ENCODE measurements at regions of chr7 and their contacts with region 1.

Region 1: DNA sequence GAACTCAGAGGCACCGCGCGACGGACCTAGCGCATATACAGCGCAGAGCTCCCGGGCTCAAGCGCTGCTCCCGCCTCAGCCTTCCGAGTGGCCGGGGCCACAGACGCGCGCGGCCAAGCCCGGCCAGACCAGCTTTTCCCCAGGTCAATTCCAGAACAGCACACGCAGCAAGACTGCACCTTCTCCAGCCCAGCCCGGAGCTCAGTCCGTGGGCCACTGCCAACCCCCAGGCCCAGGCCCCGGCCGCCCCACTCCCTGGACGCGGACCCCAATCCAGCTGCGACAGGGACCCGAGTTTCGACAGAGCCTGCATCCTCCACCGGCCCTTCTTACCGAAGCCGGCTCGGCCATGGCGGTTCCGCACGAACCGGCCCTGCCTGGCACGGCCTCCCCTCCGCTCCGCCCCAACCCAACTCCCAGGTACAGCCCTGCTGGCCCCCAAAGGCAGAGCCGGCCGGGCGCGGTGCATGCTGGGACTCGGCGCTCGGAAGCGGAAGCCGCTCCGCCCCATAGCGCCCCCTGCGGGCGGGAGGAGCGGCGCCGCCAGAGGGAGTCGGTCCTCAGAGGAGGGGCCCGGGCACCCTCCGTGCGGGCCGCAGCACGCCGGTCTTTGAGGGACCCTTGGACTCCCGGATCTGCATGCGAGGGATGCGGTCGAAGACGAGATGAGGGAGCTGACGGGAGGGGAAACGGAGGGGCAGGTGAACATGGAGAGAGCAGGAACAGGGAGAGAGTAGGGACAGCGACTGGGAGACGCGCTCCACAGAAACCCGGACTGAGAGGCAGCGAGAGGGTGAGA is at the start of gene ZNF425:
- DNase-seq: peak; percentile 98
- ATAC-seq: peak; percentile 82
- H3K4me3 Mint-ChIP-seq: peak within 1 kb of the TSS; percentile 98
- H3K27ac Mint-ChIP-seq: peak within 1 kb of the TSS; percentile 98
- H3K4me1 Mint-ChIP-seq: peaks cover 21% of the 10 kb centered on the region
- H3K27me3 Mint-ChIP-seq: no peaks in the 10 kb centered on the region
- CTCF ChIP-seq: peak; percentile 31
- total RNA-seq, gene ZNF425: 1.4 and 1.9 TPM in 2 replicates

Region 2: GRCh38 chr7:148940702-148941597 is 185.1 kb before region 1 on chr7:
- CTCF ChIA-PET with region 1: no interaction called
- POLR2A ChIA-PET with region 1: no interaction called
- intact Hi-C with region 1: loop called (anchors 1 kb)
- DNase-seq: peak; percentile 68
- ATAC-seq: peak; percentile 77
- H3K4me3 Mint-ChIP-seq: peak overlapping the region; percentile 97
- H3K27ac Mint-ChIP-seq: peak overlapping the region; percentile 99
- H3K4me1 Mint-ChIP-seq: peaks cover 17% of the 10 kb centered on the region
- H3K27me3 Mint-ChIP-seq: no peaks in the 10 kb centered on the region
- CTCF ChIP-seq: no peak

Region 3: GRCh38 chr7:149005241-149006050 is 120.6 kb before region 1 on chr7:
- CTCF ChIA-PET with region 1: interaction called, 3 read pairs
- POLR2A ChIA-PET with region 1: interaction called, 4 read pairs
- intact Hi-C with region 1: loop called (anchors 1 kb)
- DNase-seq: peak; percentile 74
- ATAC-seq: peak; percentile 91
- H3K4me3 Mint-ChIP-seq: no peak overlapping the region
- H3K27ac Mint-ChIP-seq: no peak overlapping the region
- H3K4me1 Mint-ChIP-seq: peaks cover 3% of the 10 kb centered on the region
- H3K27me3 Mint-ChIP-seq: no peaks in the 10 kb centered on the region
- CTCF ChIP-seq: peak; percentile 56

Region 4: DNA sequence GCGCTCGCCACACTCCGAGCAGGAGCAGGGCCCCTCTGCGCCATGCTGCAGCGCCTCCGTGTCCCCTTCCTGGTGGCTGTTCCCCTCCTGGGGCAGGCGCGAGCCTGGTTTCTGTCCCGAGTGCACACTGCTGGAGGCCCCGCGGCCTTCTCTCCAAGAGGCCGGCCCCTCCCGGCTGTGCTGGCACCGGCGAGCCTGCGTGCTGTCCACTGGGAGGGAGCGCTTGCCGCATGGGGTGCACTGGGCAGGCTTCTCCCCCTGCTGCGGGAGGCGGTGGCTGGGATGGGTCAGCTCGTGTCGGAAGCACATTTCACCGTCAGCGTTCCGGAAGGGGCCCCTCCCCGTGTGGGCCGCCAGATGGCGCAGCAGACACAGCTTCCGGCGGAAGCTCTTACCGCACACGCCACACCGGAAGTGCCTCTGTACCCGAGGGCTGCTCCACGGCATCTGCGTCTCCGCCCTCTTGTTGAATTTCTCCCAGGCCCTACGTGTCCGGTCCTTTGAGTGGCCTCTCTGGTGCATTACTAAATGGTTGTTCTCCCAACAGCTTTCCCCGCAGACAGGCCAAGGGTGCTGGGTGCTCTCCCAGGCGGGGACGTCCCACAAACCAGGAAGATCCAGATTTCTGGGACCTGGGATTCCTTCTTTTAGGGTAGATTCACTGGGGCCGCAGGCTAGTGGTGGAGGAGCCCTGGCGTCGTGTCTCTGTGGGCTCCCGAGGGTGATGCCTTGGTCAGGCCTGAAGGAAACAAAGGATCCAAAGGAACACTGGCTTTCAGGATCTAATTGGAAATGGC is 54.2 kb before region 1 on chr7:
- CTCF ChIA-PET with region 1: interaction called, 11 read pairs
- POLR2A ChIA-PET with region 1: no interaction called
- intact Hi-C with region 1: no loop called
- DNase-seq: no peak
- ATAC-seq: peak; percentile 45
- H3K4me3 Mint-ChIP-seq: no peak overlapping the region
- H3K27ac Mint-ChIP-seq: no peak overlapping the region
- H3K4me1 Mint-ChIP-seq: peaks cover 4% of the 10 kb centered on the region
- H3K27me3 Mint-ChIP-seq: no peaks in the 10 kb centered on the region
- CTCF ChIP-seq: no peak

Region 5: GRCh38 chr7:149081914-149082313 is 44.1 kb before region 1 on chr7:
- CTCF ChIA-PET with region 1: no interaction called
- POLR2A ChIA-PET with region 1: no interaction called
- intact Hi-C with region 1: no loop called
- DNase-seq: no peak
- ATAC-seq: no peak
- H3K4me3 Mint-ChIP-seq: no peak overlapping the region
- H3K27ac Mint-ChIP-seq: no peak overlapping the region
- H3K4me1 Mint-ChIP-seq: peaks cover 11% of the 10 kb centered on the region
- H3K27me3 Mint-ChIP-seq: no peaks in the 10 kb centered on the region
- CTCF ChIP-seq: no peak

Region 6: DNA sequence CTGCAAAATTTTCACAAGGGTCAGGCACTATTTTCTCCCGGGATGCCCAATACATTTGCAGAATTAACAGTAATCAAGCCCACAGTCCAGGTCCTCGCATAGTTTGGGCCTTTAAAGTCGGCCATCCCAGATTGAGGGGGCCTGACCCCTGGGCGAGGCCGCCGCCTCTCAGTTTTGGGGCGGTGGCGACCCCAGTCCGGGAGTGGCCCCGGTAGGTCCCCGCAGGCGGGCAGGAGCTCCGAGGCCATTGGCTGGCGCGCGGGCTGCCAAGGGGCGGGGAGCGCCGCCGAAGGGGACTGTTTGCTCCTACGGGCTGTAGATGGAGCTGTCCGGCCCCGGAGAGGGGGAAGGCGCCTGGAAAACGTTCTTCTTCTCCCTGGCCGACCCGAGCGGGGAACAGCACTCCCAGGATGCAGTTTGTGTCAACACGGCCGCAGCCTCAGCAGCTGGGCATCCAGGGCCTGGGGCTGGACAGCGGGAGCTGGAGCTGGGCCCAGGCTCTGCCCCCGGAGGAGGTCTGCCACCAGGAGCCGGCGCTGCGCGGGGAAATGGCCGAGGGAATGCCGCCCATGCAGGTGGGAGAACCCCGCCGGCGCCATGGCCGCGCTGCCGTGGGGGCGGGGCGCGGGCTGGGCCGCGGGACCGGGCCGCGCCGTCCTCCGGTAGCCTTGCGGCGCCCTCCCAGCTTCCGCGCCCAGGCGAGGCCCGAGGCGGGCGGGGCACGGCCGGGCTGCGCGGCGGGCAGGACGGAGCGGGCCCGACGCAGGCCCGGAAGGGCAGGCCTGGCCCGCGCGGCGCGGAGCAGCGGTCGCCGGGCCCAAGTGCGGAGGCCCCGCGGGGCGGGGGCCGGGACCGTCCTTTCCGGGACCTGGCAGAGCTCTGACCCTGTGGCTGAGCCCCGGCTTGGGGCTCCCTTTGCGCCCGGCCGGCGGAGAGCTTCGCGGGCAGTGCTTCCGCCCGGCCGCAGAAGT is 69.4 kb after region 1 on chr7 and contains the start of gene ZNF282:
- CTCF ChIA-PET with region 1: interaction called, 5 read pairs
- POLR2A ChIA-PET with region 1: interaction called, 8 read pairs
- intact Hi-C with region 1: loop called (anchors 1 kb)
- DNase-seq: peak; percentile 68
- ATAC-seq: peak; percentile 88
- H3K4me3 Mint-ChIP-seq: peak within 1 kb of the TSS; percentile 89
- H3K27ac Mint-ChIP-seq: peak within 1 kb of the TSS; percentile 66
- H3K4me1 Mint-ChIP-seq: peaks cover 31% of the 10 kb centered on the region
- H3K27me3 Mint-ChIP-seq: no peaks in the 10 kb centered on the region
- CTCF ChIP-seq: no peak
- total RNA-seq, gene ZNF282: 21.6 and 21.7 TPM in 2 replicates

Region 7: DNA sequence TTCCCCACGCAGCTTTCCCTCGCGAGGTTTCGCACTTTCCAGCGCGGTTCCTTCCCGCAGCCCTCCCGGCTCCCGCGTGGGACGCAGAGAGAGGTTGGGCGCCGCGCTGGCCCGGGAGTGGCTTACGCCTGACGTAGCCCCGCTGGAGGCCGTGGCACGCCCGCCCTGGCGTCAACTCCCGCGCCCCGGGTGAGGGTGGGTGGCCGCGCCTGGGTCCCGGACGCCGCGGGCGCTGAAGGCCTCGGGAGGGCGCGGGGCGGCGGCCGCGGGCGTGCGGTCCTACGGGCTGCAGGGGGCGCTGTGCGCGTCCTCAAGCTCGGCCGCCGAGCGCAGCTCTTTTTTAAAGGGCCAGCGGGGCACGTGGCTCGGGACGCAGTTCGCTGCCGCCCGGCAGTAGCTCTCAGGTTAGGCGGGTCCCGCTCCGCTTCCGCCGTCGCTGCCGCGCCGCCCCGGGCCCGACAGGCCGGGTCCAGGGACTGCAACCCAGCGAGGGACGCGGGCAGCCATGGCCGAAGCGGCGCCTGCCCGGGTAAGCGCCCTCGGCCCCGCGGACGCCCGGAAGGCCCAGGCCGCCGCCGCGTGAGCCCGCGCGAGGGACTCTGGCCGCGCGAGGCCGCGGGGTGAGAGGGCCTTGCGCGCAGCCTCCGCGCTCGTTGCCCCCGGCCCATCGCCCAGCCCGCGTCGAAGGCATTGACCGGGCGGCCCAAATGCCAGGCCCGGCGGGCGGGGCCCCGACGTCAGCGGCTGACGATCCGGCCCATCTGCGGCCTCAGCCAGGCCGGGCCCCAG is 136.0 kb after region 1 on chr7 and contains the start of gene ZNF783:
- CTCF ChIA-PET with region 1: no interaction called
- POLR2A ChIA-PET with region 1: interaction called, 4 read pairs
- intact Hi-C with region 1: loop called (anchors 1 kb)
- DNase-seq: peak; percentile 88
- ATAC-seq: peak; percentile 91
- H3K4me3 Mint-ChIP-seq: peak within 1 kb of the TSS; percentile 89
- H3K27ac Mint-ChIP-seq: peak within 1 kb of the TSS; percentile 90
- H3K4me1 Mint-ChIP-seq: peaks cover 23% of the 10 kb centered on the region
- H3K27me3 Mint-ChIP-seq: no peaks in the 10 kb centered on the region
- CTCF ChIP-seq: no peak
- total RNA-seq, gene ZNF783: 28.5 and 34.1 TPM in 2 replicates

Region 8: GRCh38 chr7:149291036-149291780 is 165.1 kb after region 1 on chr7:
- CTCF ChIA-PET with region 1: no interaction called
- POLR2A ChIA-PET with region 1: no interaction called
- intact Hi-C with region 1: no loop called
- DNase-seq: no peak
- ATAC-seq: no peak
- H3K4me3 Mint-ChIP-seq: no peak overlapping the region
- H3K27ac Mint-ChIP-seq: no peak overlapping the region
- H3K4me1 Mint-ChIP-seq: peaks cover 12% of the 10 kb centered on the region
- H3K27me3 Mint-ChIP-seq: no peaks in the 10 kb centered on the region
- CTCF ChIP-seq: no peak

Region 9: GRCh38 chr7:149714050-149714909 is 588.2 kb after region 1 on chr7:
- CTCF ChIA-PET with region 1: no interaction called
- POLR2A ChIA-PET with region 1: no interaction called
- intact Hi-C with region 1: loop called (anchors 10 kb)
- DNase-seq: peak; percentile 88
- ATAC-seq: peak; percentile 91
- H3K4me3 Mint-ChIP-seq: peak overlapping the region; percentile 83
- H3K27ac Mint-ChIP-seq: no peak overlapping the region
- H3K4me1 Mint-ChIP-seq: peaks cover 17% of the 10 kb centered on the region
- H3K27me3 Mint-ChIP-seq: no peaks in the 10 kb centered on the region
- CTCF ChIP-seq: no peak